ENCODE measurements at regions of chr13 and their contacts with region 1.

Region 1: GRCh38 chr13:40682449-40683240 is 16.2 kb upstream of the FOXO1 start:
- DNase-seq: peak in 2 of 5 donors; percentile 38 to 50
- H3K4me3 ChIP-seq: no peak overlapping the region
- H3K4me3 Mint-ChIP-seq: no peak overlapping the region
- H3K27ac ChIP-seq: no peak overlapping the region
- H3K27ac Mint-ChIP-seq: peak overlapping the region in 1 of 8 donors; percentile 9
- H3K4me1 ChIP-seq: peaks cover 5% of the 10 kb centered on the region
- H3K4me1 Mint-ChIP-seq: peaks cover 1 to 7% (median 5%) of the 10 kb centered on the region in 3 donors
- H3K27me3 ChIP-seq: no peaks in the 10 kb centered on the region
- H3K27me3 Mint-ChIP-seq: no peaks in the 10 kb centered on the region

Region 2: DNA sequence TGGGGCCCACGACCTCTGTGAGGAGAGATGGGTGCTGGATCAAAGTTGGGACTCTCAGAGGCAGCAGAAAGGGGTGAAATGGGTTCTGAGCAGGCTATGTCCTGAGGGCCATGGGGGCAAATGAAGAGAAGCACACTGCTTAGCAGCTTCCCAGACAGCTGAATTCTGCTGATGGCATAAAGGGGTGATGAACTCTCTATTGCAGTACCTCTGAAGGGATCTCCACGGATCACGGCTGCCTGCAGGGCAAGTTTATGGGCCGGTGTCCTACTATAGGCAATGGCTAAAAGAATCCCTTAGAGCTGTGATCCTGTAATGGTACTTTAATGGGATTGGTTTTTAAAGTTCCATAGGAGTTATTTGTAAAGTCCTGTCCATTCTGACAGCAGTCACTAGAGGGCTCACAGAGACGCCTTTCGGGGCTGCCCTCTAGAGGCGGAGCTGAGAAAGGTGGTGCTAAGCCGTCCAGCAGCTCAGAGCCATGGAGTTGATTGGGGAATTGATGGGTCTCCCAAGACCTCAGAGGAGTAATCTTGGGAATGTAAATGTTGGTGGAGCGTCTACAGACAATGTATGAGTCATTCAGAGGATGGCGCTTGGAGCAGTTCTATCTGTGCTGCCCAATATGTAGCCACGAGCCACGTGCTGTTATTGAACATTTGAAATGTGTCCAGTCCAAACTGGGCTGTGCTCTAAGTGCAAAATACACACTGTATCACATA is 739.9 kb before region 1 on chr13:
- CTCF ChIA-PET with region 1: interaction called, 48 read pairs
- POLR2A ChIA-PET with region 1: no interaction called
- DNase-seq: peak; percentile 47 to 81 (median 53)
- H3K4me3 ChIP-seq: no peak overlapping the region
- H3K4me3 Mint-ChIP-seq: no peak overlapping the region
- H3K27ac ChIP-seq: no peak overlapping the region
- H3K27ac Mint-ChIP-seq: no peak overlapping the region
- H3K4me1 ChIP-seq: no peaks in the 10 kb centered on the region
- H3K4me1 Mint-ChIP-seq: peaks cover 2 to 5% (median 4%) of the 10 kb centered on the region in 3 donors
- H3K27me3 ChIP-seq: no peaks in the 10 kb centered on the region
- H3K27me3 Mint-ChIP-seq: peaks cover 0 to 10% of the 10 kb centered on the region in 2 donors

Region 3: DNA sequence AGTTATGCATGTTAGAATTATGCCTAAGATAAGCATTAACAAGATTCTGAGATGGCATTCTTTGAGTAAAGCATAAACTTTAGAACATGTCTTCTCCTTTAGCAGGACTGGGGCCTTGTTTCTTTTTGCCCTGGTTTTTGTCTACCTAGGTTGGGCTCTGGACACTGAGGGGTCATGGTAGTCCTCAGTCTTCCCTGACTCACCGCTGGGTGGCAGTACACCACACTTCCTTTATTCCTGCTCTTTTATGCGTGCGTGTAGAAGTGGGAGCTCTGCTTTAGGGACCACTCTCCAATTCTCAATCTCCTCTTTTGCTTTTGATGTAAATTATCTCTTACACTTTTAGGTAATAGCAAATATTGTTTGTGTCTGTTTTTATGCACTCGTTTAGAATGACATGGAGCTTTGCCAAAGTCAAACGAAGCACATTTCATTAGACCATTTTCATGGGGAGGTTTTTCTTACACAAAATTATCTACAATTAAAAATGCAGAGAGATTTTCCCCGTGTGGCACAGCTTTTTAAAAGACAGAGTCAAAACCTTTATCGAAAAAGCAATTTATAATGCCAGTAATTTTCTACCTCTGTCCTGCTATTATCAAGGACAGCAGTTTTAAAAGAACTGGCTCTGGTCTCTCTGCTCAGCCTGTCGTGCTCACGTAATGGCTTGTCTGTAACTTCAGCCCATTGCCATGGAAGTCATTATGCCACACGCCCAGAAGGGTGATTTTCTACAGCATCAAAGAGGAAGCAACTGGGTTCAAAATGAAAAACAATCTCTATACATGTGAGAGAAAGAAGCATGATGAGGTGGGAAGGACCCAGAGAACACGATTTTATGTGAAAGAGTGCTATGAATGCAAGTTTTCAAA is 613.2 kb before region 1 on chr13:
- CTCF ChIA-PET with region 1: interaction called, 78 read pairs
- POLR2A ChIA-PET with region 1: interaction called, 4 read pairs
- DNase-seq: peak; percentile 54 to 80 (median 62)
- H3K4me3 ChIP-seq: no peak overlapping the region
- H3K4me3 Mint-ChIP-seq: no peak overlapping the region
- H3K27ac ChIP-seq: no peak overlapping the region
- H3K27ac Mint-ChIP-seq: peak overlapping the region in 1 of 8 donors; percentile 52
- H3K4me1 ChIP-seq: peaks cover 12% of the 10 kb centered on the region
- H3K4me1 Mint-ChIP-seq: peaks cover 10 to 19% (median 18%) of the 10 kb centered on the region in 3 donors
- H3K27me3 ChIP-seq: no peaks in the 10 kb centered on the region
- H3K27me3 Mint-ChIP-seq: peaks cover 0 to 4% of the 10 kb centered on the region in 2 donors

Region 4: DNA sequence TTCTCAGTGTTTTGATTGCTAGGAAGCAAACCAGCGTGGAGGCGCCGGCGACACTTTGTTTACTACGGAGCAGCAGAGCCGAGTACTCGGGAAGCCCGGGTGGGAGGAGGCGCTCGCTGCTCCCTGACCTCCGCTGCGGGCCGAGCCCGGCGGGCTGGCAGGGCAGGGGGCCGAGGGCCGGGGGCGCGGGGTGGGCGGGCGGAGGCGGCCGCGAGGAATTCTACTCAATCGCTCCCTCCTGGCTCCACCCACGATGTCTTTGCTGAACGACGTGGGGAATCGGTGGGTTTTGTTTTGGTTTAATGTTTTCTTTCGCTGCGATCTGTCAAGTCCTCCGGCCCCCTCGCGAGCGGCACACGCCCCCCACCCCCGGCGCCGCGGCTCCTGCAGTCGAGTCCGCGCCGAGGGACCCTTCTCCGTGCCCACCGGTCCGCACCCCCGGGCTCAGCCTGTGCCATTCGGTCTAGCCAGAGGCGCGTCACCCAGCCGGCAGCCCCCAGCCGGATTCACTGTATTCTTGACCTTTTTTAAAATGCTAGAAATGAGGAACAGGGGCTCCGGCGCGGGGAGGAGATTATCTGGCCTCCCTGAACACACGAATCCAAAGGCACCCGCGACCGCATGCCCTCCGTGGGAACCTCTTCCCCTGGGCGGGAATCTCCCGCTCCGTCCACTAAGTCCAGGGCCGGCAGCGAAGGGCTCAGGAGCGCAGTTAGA is 15.6 kb before region 1 on chr13:
- CTCF ChIA-PET with region 1: interaction called, 21 read pairs
- POLR2A ChIA-PET with region 1: no interaction called
- DNase-seq: peak in 3 of 5 donors; percentile 17 to 61 (median 26)
- H3K4me3 ChIP-seq: peak overlapping the region; percentile 74
- H3K4me3 Mint-ChIP-seq: peak overlapping the region; percentile 85 to 97 (median 92)
- H3K27ac ChIP-seq: peak overlapping the region; percentile 59
- H3K27ac Mint-ChIP-seq: peak overlapping the region; percentile 80 to 95 (median 90)
- H3K4me1 ChIP-seq: peaks cover 24% of the 10 kb centered on the region
- H3K4me1 Mint-ChIP-seq: peaks cover 30 to 33% (median 33%) of the 10 kb centered on the region in 3 donors
- H3K27me3 ChIP-seq: no peaks in the 10 kb centered on the region
- H3K27me3 Mint-ChIP-seq: no peaks in the 10 kb centered on the region

Region 5: GRCh38 chr13:40671956-40672764 is 10.5 kb before region 1 on chr13:
- CTCF ChIA-PET with region 1: interaction called, 21 read pairs
- POLR2A ChIA-PET with region 1: no interaction called
- DNase-seq: no peak
- H3K4me3 ChIP-seq: no peak overlapping the region
- H3K4me3 Mint-ChIP-seq: no peak overlapping the region
- H3K27ac ChIP-seq: no peak overlapping the region
- H3K27ac Mint-ChIP-seq: no peak overlapping the region
- H3K4me1 ChIP-seq: peaks cover 15% of the 10 kb centered on the region
- H3K4me1 Mint-ChIP-seq: peaks cover 14 to 20% (median 14%) of the 10 kb centered on the region in 3 donors
- H3K27me3 ChIP-seq: no peaks in the 10 kb centered on the region
- H3K27me3 Mint-ChIP-seq: no peaks in the 10 kb centered on the region

Region 6: DNA sequence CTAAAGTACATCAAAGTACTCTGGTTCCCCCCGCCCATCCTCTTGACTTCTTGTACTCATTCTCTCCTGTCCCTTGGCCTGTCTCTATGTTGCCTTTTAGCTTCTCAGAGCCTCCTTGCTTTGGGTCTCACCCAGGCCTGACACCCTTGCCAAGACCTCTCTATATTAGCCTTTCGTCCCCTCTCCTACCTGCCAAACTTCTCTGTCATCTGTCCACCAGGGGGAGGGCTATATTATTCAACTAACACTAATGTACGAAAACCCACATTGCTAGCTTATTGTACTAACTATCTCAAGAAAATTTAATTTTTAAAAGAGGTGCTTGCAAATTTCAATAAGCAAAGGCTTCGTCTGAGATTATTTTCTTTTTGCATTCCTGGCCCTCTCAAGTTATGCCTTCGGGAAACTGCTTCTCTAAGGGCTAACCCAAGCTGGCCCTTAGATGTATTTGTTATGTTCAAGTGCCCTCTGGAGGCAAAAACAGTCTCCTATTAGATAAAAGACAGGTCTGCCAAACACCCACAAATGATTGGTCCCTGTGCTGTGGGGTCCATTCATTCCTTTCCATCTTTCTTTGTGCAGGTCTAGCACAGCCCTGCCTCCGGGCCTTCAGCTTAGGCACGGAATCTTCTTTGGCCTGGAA is 94.6 kb after region 1 on chr13:
- CTCF ChIA-PET with region 1: interaction called, 11 read pairs
- POLR2A ChIA-PET with region 1: no interaction called
- DNase-seq: peak in 3 of 5 donors; percentile 41 to 55 (median 52)
- H3K4me3 ChIP-seq: peak overlapping the region; percentile 16
- H3K4me3 Mint-ChIP-seq: peak overlapping the region; percentile 59 to 86 (median 83)
- H3K27ac ChIP-seq: peak overlapping the region; percentile 19
- H3K27ac Mint-ChIP-seq: peak overlapping the region; percentile 91 to 99 (median 96)
- H3K4me1 ChIP-seq: peaks cover 23% of the 10 kb centered on the region
- H3K4me1 Mint-ChIP-seq: peaks cover 19 to 32% (median 27%) of the 10 kb centered on the region in 3 donors
- H3K27me3 ChIP-seq: no peaks in the 10 kb centered on the region
- H3K27me3 Mint-ChIP-seq: no peaks in the 10 kb centered on the region

Measured in CD8-positive, alpha-beta memory T cell (primary cell).